Heart left ventricle (tissue), 16 donors: ENCODE measurements at regions of chr1 and their contacts with region 1.

Region 1: GRCh38 chr1:202462342-202463076 is 114.0 kb downstream of the PPP1R12B start:
- DNase-seq: peak in 2 of 5 donors; percentile 44 to 50
- ATAC-seq: peak; percentile 44 to 81 (median 68)
- H3K4me3 ChIP-seq: peak overlapping the region in 11 of 12 donors; percentile 18 to 65 (median 47)
- H3K27ac ChIP-seq: peak overlapping the region; percentile 47 to 97 (median 76)
- H3K4me1 ChIP-seq: peaks cover 0 to 46% (median 11%) of the 10 kb centered on the region in 12 donors
- H3K27me3 ChIP-seq: peaks cover 0 to 14% (median 0%) of the 10 kb centered on the region in 9 donors
- CTCF ChIP-seq: no peak
- POLR2A ChIP-seq: no peak

Region 2: GRCh38 chr1:202221911-202222909 is 240.3 kb before region 1 on chr1:
- intact Hi-C with region 1: no loop called
- DNase-seq: no peak
- ATAC-seq: peak in 2 of 4 donors; percentile 29 to 41
- H3K4me3 ChIP-seq: no peak overlapping the region
- H3K27ac ChIP-seq: no peak overlapping the region
- H3K4me1 ChIP-seq: peaks cover 0 to 24% (median 0%) of the 10 kb centered on the region in 12 donors
- H3K27me3 ChIP-seq: peaks cover 0 to 14% (median 3%) of the 10 kb centered on the region in 9 donors
- CTCF ChIP-seq: no peak
- POLR2A ChIP-seq: no peak

Region 3: DNA sequence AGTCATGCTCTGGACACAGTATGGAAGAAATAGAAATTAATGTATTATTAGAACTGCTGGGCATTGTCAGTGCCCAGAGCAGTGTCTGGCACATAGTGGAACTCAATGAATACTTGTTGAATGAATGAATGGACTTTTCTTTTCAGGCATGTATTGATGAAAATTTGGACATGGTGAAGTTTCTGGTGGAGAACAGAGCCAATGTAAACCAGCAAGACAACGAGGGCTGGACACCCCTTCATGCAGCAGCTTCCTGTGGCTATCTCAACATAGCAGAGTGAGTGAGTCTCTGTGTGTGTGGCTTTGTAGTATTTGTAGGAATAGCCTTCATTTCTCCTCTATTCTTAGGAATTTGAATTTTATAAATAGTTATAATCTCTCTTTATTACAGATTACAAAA is 45.9 kb before region 1 on chr1:
- intact Hi-C with region 1: loop called in 2 of 10 experiments (anchors 5 kb)
- DNase-seq: no peak
- ATAC-seq: no peak
- H3K4me3 ChIP-seq: no peak overlapping the region
- H3K27ac ChIP-seq: peak overlapping the region in 3 of 12 donors; percentile 1 to 50 (median 35)
- H3K4me1 ChIP-seq: peaks cover 0 to 49% (median 15%) of the 10 kb centered on the region in 12 donors
- H3K27me3 ChIP-seq: no peaks in the 10 kb centered on the region
- CTCF ChIP-seq: no peak
- POLR2A ChIP-seq: no peak

Region 4: DNA sequence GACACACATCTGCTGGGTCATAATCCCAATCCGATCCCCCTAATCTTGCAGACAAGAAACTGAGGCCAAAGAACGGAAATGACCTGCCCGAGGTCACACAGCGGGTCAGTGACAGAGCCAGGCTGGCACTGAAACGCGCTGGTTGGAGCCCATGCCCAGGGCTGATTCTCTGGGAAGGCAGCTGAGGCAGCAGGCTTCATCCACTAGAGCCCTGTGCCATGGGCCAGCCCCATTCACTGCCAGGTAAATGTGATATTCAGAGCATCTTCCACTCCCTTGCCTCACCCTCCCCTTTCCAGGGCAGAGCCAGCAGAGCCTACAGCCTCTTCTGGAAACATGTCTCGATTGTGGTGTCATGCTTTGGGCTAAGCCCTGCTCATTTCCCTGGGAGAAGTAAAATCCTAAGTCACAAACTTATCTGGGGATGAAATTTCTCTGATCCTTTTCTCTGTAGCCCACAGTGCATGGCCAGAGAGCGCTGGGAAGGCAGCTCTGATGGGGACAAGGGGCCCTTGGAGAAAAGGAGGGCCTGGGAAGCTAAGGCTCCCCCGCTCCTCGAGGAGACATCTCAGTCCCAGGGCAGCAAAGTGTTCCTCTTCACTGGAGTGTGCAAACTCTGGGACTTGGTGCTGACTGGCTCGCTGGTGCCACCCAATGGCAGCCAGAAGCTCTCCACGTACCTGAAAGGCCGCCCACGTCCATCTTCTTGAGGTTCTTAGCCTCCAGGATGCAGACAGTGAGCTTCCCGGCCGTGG is 137.3 kb after region 1 on chr1:
- intact Hi-C with region 1: loop called in 1 of 10 experiments (anchors 10 kb)
- DNase-seq: peak; percentile 50 to 73 (median 64)
- ATAC-seq: peak; percentile 67 to 88 (median 84)
- H3K4me3 ChIP-seq: no peak overlapping the region
- H3K27ac ChIP-seq: peak overlapping the region in 3 of 12 donors; percentile 22 to 27 (median 26)
- H3K4me1 ChIP-seq: peaks cover 0 to 8% (median 3%) of the 10 kb centered on the region in 12 donors
- H3K27me3 ChIP-seq: peaks cover 0 to 63% (median 0%) of the 10 kb centered on the region in 9 donors
- CTCF ChIP-seq: peak; percentile 54 to 81 (median 72)
- POLR2A ChIP-seq: no peak

Region 5: DNA sequence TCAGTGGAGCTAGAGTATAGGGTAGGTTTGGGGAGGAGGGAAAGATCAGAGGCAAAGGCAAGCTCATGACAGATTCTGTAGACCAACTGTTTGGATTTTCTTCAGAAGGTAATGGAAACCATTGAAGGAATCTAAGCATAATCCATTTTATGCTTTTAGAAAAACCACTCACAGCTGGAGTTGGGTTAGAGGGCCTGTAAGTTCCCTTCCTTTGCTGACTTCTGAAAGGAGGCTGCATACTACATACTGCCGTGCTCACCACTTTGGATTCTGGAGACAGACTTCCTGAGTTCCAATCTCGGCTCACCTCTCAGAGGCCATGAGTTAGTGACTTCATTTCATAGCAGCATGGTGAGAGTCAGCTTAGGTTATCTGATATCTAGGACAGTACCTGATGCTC is 254.1 kb after region 1 on chr1:
- intact Hi-C with region 1: loop called in 7 of 10 experiments (anchors 2 to 10 kb)
- DNase-seq: no peak
- ATAC-seq: no peak
- H3K4me3 ChIP-seq: no peak overlapping the region
- H3K27ac ChIP-seq: no peak overlapping the region
- H3K4me1 ChIP-seq: peaks cover 0 to 3% (median 0%) of the 10 kb centered on the region in 12 donors
- H3K27me3 ChIP-seq: peaks cover 0 to 61% (median 0%) of the 10 kb centered on the region in 9 donors
- CTCF ChIP-seq: no peak
- POLR2A ChIP-seq: no peak